ENCODE measurements at regions of chr19 and their contacts with region 1.

Region 1: GRCh38 chr19:58182989-58183816 is at the start of gene ZNF274:
- DNase-seq: peak; percentile 98
- total RNA-seq, gene ZNF274: 26.7 TPM

Region 2: GRCh38 chr19:58196901-58197616 is 13.9 kb after region 1 on chr19:
- intact Hi-C with region 1: no loop called
- DNase-seq: no peak

Region 3: GRCh38 chr19:58278157-58279041 is 95.2 kb after region 1 on chr19 and contains the start of gene ZNF8:
- intact Hi-C with region 1: loop called (anchors 1 kb)
- DNase-seq: peak; percentile 98
- total RNA-seq, gene ZNF8: 6.2 TPM

Region 4: DNA sequence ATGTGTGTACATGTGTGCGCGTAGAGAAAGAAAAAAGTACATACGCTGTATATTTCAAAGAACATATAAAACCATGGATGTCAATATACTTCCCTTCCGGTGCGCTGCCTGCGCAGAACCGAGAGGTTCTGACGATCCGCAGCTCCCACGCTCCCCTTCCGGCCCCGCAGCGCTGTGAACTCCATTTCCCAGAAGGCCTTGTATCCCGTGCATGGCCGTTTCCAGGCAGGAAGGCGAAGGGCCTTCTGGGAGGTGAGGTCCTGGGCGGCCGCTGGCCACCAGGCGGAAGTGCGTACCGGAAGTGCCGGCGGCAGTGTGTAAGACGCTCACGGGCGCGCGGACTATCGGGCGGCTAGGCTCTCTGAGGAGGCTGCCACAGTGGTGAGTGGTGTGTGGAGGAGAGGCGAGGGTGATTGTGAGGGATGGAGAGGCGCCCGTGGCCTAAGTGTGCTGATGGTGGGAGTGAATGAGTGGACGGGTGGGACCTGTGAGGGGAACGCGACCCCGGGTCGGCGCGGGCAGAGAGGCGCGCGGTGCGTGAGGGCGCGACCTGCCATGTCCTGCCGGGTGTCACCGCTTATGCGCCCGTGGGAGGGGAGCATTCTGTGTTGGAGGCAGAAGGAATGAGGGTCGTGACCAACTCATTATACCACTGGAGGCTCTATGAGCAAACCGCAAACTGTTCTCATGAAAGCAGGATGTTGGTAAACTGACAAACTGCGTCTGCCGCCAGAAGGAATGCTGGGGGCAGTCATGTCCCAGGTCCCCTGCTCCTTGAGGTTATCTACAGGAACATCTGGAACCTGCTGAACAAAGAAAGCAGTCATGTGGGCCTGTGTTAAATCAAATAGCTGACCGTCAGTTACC is 122.1 kb after region 1 on chr19 and contains the start of gene ERVK3-1:
- intact Hi-C with region 1: loop called (anchors 2 kb)
- DNase-seq: peak; percentile 98
- total RNA-seq, gene ERVK3-1: 17.1 TPM